HEK293T (cell line): ENCODE measurements at regions of chr2 and their contacts with region 1.

Region 1: DNA sequence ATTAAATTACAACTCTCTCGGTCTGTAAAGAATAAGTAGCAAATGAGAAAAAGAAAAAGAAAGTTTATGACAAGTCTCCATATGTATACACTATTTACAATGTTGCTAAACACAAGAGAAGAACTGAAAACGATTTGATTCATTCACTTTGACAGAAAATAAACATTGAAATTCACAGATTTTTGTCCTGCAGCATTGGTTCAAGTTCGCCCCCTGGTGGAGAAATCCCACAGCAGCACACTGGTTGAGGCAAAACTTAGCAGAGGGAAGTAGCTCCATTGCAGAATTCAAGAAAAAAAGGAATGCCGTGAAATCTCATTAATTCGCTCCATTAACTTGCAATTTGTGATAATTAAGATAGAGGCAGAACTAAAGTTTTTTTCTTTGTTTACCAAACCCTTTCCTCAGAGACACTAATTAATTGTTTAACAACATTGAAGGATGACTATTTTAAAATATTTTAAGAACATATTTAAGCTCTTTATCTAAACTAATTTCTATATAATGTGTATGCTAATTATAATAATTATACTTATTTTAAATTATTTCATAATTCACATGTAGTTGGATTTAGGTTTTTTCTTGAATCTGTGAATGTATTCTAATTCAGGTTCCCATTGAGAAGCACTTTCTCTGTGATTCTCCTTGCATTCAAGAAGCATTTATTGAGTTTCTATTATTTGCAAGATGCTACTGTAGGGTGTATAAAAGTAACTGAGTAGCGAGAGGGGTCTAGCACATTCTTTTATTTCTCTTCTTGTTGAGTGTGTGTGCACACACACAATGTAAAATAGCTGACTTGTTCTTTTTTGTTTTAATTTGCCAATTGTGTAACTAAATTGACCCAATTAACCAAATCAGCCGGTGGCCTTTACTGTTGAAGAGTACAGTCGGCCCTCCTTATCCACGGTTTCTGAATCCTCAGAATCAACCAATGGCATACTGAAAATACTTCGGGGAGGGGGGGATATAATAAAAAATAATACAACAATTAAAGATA is 74.1 kb downstream of the COL4A3 start:
- DNase-seq: peak; percentile 57

Region 2: GRCh38 chr2:227132986-227133385 is 105.6 kb before region 1 on chr2:
- CTCF ChIA-PET with region 1: interaction called, 35 read pairs
- POLR2A ChIA-PET with region 1: interaction called, 3 read pairs
- DNase-seq: no peak